ENCODE measurements at regions of chr3 and their contacts with region 1.

Region 1: DNA sequence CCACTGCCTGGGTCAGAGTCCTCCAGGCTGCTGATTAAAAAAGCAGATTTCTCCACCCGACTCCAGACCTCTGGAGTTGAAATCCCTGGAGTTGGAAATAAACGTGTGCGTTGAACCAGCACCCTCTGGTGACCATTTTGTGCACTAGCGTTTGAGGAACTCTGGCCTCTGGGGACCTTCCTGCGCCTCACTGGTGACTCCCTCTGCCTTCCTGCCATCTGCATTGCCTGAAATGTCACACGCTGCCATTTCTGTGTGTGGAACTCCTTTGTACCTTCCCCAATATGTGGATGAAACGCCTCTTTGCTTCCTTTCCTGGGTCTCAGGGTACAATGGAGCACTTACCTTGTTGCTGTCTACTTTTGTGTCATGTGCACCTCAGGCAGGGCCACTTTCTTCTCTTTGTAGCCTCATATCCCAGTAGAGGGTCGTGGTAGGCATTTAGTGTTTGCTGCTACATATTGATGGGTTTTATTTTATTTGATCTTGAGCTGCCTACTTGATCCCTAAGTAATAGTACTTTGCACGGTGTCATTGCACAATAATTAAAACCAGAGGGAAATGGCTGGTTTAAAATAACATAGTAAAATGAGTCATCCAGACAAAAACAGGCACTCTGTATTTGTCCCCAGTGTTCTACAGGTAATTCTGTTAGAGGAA is 56.8 kb downstream of the GPR171 start:
- DNase-seq: peak; percentile 85 to 92 (median 90)
- H3K4me3 ChIP-seq: peak overlapping the region in 4 of 7 experiments; percentile 39 to 70 (median 46)
- H3K27ac ChIP-seq: peak overlapping the region; percentile 6 to 70
- H3K4me1 ChIP-seq: peaks cover 8 to 45% (median 33%) of the 10 kb centered on the region in 4 experiments
- H3K27me3 ChIP-seq: no peaks in the 10 kb centered on the region

Region 2: GRCh38 chr3:150925751-150926201 is 220.4 kb before region 1 on chr3:
- CTCF ChIA-PET with region 1: interaction called, 13 read pairs
- POLR2A ChIA-PET with region 1: no interaction called
- DNase-seq: peak; percentile 61 to 93 (median 91)
- H3K4me3 ChIP-seq: peak overlapping the region; percentile 43 to 86 (median 69)
- H3K27ac ChIP-seq: peak overlapping the region; percentile 4 to 13
- H3K4me1 ChIP-seq: peaks cover 0 to 13% (median 9%) of the 10 kb centered on the region in 4 experiments
- H3K27me3 ChIP-seq: no peaks in the 10 kb centered on the region

Region 3: GRCh38 chr3:151067158-151067557 is 79.0 kb before region 1 on chr3:
- CTCF ChIA-PET with region 1: interaction called, 11 read pairs
- POLR2A ChIA-PET with region 1: no interaction called
- DNase-seq: peak; percentile 58 to 68 (median 64)
- H3K4me3 ChIP-seq: no peak overlapping the region
- H3K27ac ChIP-seq: no peak overlapping the region
- H3K4me1 ChIP-seq: no peaks in the 10 kb centered on the region
- H3K27me3 ChIP-seq: no peaks in the 10 kb centered on the region

Region 4: DNA sequence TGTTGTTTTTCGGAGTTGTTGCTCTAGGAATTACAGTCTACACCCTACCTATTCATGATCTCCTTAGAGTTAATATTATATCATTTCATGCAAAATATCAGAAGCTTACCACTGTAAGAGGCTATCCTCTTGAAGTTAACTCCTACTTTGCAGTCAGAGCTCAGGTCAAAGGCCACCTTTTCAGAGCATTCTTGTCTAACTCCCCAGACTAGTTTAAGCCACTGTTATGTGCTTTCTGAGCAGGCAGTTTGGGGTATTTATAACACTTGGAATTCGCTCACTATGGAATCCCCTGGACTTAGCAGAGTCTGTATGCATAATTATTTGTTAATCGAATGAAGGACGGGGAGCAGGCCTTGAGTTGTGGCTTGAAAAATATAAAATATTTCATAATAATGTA is 39.0 kb before region 1 on chr3:
- CTCF ChIA-PET with region 1: interaction called, 17 read pairs
- POLR2A ChIA-PET with region 1: no interaction called
- DNase-seq: no peak
- H3K4me3 ChIP-seq: no peak overlapping the region
- H3K27ac ChIP-seq: no peak overlapping the region
- H3K4me1 ChIP-seq: peaks cover 0 to 47% (median 15%) of the 10 kb centered on the region in 4 experiments
- H3K27me3 ChIP-seq: no peaks in the 10 kb centered on the region

Region 5: DNA sequence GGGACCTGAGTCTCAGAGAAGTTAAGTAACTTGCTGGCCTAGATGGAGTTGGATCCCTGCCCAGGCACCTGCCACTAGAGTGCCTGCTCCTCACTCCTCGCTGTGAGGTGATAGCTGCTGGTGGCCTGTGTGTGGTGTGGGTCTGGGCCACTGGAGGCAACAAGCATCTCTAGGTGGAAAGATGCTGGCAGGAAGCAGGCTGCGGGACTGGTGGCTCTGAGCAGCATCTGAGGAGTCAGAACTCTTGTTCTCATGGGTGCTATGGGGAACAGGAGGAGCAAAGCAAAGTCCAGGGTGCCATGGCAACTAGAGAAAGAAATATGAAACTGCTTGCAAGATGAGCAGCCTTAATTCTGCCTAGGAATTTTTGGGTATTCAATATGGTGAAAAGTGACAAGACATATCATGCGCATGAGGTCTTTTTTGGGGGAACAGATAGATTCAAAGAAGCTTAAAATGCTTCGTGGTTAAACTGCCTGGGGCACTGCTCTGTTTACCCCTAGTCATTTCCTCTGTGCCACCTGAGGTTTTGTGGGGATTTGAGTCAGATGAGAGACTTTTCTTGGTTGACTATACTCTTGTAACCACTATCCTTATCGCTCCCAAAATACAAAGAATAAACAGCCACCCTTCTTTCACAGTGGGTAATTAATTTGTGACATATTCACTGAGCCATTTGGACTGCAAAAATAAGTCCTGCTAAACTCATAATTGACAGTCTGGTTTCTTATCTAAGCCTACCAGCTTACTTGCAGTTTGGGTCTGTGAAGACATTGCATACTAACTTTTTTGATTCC is 10.5 kb before region 1 on chr3:
- CTCF ChIA-PET with region 1: interaction called, 23 read pairs
- POLR2A ChIA-PET with region 1: interaction called, 3 read pairs
- DNase-seq: peak; percentile 93 to 99 (median 98)
- H3K4me3 ChIP-seq: peak overlapping the region in 4 of 7 experiments; percentile 38 to 56 (median 48)
- H3K27ac ChIP-seq: peak overlapping the region; percentile 87 to 92
- H3K4me1 ChIP-seq: peaks cover 18 to 65% (median 37%) of the 10 kb centered on the region in 4 experiments
- H3K27me3 ChIP-seq: no peaks in the 10 kb centered on the region